ENCODE measurements at regions of chr10 and their contacts with region 1.

Region 1: DNA sequence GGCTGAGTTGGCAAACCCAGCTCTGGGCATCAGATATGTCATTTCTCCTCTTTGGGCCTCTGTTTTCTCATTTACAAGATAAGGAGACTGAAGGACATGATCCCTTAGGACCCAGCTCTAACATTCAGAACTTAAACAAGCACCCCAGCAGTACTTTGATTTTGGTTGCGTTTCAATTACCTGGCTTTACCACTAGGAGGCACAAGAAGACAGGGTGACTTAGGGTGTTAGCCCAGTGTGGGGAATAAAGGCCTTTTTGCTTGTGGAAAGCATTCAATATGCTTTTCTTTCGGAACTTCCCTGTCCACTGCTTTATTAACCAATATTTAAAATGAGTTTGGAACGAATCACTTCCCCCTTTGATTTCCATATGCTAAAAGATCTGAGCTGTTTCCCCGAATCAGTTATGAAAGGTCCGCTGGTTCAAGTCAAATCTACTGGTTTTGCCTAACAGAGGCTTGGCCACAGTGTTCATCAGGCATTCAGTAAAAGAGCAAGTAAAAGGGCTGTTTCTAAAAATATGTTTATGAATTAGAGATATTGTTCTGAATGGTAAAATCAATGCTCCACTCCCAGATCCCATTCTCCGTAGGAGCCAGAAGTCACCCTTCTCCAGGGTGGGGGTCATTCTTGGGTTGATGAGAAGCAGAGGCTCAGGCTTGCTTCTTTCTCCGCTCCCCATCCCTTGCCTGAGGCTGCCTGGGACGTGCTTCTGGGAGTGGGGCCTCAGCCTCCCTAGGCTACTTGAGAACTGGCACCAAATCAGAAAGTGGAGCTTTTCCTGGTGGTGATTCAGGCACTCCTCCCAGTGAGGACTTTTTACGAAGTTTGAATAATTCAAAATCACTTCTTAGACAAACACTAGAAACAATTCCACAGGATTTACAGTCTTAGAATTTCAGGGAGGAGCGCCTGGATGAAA is 105.5 kb downstream of the MYOF start:
- H3K4me3 ChIP-seq: no peak overlapping the region
- H3K27ac ChIP-seq: no peak overlapping the region
- H3K4me1 ChIP-seq: 0 out of 2 replicates have a peak, but pooled peaks cover 4% of the 10 kb centered on the region
- CTCF ChIP-seq: peak; percentile 59; the same call in 1 of the 2 replicates

Region 2: DNA sequence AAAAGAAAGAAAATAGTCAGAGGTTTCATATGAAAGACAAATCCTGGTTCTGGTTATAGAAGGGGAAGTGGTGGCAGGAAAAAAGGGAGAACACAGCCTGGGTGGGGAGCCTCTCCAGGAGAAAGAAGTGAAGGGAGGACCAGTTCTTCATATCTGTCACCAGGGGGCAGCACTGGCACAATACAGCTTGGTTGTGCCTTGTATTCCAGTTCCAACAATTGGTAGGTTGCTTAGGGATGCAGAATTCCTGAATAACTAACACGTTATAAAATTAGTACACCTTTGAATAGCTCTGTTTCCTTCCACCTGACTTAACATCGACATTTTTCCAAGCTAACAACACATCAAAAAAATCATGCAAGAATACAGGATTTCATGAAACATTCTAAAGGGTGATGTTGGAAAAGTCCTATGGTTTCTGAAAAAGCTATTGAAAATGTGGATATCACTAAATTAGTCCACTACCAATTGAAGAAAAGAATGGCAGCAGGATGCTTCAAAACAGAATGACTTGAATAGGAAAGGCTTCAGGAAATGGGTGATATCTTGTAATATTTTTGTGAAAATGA is 250.1 kb before region 1 on chr10:
- CTCF ChIA-PET with region 1: no interaction called
- POLR2A ChIA-PET with region 1: no interaction called
- H3K4me3 ChIP-seq: no peak overlapping the region
- H3K27ac ChIP-seq: no peak overlapping the region
- H3K4me1 ChIP-seq: no peaks in the 10 kb centered on the region
- CTCF ChIP-seq: no peak

Region 3: GRCh38 chr10:93245779-93246178 is 130.9 kb before region 1 on chr10:
- CTCF ChIA-PET with region 1: no interaction called
- POLR2A ChIA-PET with region 1: no interaction called
- H3K4me3 ChIP-seq: no peak overlapping the region
- H3K27ac ChIP-seq: no peak overlapping the region
- H3K4me1 ChIP-seq: no peaks in the 10 kb centered on the region
- CTCF ChIP-seq: no peak

Region 4: GRCh38 chr10:93352638-93353383 is 23.8 kb before region 1 on chr10:
- CTCF ChIA-PET with region 1: interaction called, 17 read pairs
- POLR2A ChIA-PET with region 1: no interaction called
- H3K4me3 ChIP-seq: no peak overlapping the region
- H3K27ac ChIP-seq: no peak overlapping the region
- H3K4me1 ChIP-seq: no peaks in the 10 kb centered on the region
- CTCF ChIP-seq: no peak

Region 5: DNA sequence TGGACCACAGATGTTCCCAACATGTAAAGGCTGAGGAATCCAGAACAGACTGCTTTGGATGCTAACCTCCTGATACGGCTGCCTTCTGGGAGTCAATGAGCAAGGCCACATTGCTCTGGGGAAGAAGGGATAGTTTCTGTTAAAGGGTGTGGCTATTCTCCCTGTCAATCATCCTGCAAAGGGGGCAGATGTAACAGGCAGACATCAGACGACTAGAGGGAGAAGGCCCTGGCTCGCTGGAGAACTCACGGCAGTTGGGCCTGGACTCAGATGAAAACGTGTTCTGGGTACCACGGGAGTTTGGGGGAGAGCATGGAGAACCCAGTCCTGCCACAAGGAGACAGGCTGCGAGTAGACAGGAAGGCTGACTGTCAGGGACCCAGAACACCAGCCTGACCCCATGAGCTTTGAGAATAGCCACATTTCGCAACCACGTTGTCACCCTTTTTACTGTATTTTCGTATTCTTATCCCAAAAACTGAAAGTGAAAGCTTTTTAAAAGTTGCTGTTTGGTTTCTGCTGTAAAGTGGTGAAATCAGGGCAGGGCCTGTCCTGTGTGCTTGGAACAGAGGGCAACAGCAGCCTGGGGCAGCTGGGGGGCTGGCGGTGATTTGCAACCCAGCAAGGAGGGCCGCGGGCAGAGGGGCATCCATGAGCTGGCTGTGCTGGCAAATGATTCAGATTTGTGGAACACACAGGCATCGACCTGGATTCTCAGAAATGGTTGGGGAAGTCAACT is 10.2 kb after region 1 on chr10:
- CTCF ChIA-PET with region 1: interaction called, 27 read pairs
- POLR2A ChIA-PET with region 1: no interaction called
- H3K4me3 ChIP-seq: no peak overlapping the region
- H3K27ac ChIP-seq: no peak overlapping the region
- H3K4me1 ChIP-seq: no peaks in the 10 kb centered on the region
- CTCF ChIP-seq: no peak

Region 6: GRCh38 chr10:93420091-93420490 is 43.5 kb after region 1 on chr10:
- CTCF ChIA-PET with region 1: interaction called, 13 read pairs
- POLR2A ChIA-PET with region 1: no interaction called
- H3K4me3 ChIP-seq: no peak overlapping the region
- H3K27ac ChIP-seq: no peak overlapping the region
- H3K4me1 ChIP-seq: 0 out of 2 replicates have a peak, but pooled peaks cover 3% of the 10 kb centered on the region
- CTCF ChIP-seq: no peak

Region 7: GRCh38 chr10:93471110-93471651 is 94.5 kb after region 1 on chr10:
- CTCF ChIA-PET with region 1: interaction called, 67 read pairs
- POLR2A ChIA-PET with region 1: no interaction called
- H3K4me3 ChIP-seq: no peak overlapping the region
- H3K27ac ChIP-seq: no peak overlapping the region
- H3K4me1 ChIP-seq: no peaks in the 10 kb centered on the region
- CTCF ChIP-seq: no peak

Region 8: DNA sequence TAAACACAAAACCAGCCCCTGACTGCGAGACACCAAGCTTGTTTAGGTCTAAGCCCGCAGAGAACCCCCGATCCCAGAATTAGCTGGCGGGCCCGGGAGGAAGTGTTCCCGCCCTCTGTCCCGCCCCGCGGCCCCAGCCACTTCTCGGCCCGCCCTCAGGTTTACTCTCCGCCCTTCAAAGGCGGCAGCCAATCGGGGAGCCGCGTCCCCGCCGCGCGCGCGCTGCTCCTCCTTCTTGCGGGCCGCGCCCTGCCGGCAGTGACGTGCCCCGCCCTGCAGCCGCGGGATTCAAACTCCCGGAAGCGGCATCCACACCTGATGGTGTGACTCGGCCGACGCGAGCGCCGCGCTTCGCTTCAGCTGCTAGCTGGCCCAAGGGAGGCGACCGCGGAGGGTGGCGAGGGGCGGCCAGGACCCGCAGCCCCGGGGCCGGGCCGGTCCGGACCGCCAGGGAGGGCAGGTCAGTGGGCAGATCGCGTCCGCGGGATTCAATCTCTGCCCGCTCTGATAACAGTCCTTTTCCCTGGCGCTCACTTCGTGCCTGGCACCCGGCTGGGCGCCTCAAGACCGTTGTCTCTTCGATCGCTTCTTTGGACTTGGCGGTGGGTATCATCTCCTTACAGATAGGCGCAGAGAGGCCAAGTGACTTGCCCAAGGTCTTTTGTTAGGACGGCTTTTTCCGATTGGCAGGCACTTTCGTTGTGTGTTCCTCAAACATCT is 119.8 kb after region 1 on chr10 and contains the start of gene CEP55:
- CTCF ChIA-PET with region 1: interaction called, 435 read pairs
- POLR2A ChIA-PET with region 1: no interaction called
- H3K4me3 ChIP-seq: peak within 1 kb of the TSS; percentile 72
- H3K27ac ChIP-seq: peak within 1 kb of the TSS; percentile 87
- H3K4me1 ChIP-seq: no peaks in the 10 kb centered on the region; the same call in 1 of the 2 replicates
- CTCF ChIP-seq: 0 out of 2 replicates have a peak, but pooled peaks have one; percentile 14

Region 9: DNA sequence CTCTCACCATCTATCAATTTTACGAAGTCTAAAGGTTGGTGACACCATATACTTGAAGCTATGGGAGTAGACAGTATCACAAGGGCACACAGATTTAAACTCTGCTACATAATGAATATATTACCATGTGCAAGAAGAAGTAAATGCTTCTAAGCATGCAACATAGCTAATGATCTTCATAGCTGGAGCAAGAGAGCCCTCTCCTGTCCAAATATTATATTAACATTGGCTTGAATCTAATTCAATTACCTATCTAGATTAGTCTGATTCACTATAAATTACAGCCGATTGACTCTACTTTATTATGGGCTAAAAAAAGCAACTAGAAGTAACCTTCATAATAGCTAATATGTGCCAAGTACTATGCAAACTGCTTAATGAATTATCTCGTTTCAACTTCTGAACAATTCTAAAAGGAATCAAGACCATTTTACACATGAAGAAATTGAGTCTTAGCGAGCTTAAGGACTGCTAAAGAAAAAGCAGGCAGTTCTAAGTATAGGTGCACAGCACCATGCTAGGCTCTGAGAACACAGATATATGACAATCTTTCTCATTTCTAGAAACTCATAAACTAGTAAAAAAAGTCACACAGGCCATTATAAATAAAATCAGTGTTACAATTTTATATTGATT is 303.9 kb after region 1 on chr10:
- CTCF ChIA-PET with region 1: interaction called, 14 read pairs
- POLR2A ChIA-PET with region 1: no interaction called
- H3K4me3 ChIP-seq: no peak overlapping the region
- H3K27ac ChIP-seq: no peak overlapping the region
- H3K4me1 ChIP-seq: no peaks in the 10 kb centered on the region
- CTCF ChIP-seq: 0 out of 2 replicates have a peak, but pooled peaks have one; percentile 13

Region 10: DNA sequence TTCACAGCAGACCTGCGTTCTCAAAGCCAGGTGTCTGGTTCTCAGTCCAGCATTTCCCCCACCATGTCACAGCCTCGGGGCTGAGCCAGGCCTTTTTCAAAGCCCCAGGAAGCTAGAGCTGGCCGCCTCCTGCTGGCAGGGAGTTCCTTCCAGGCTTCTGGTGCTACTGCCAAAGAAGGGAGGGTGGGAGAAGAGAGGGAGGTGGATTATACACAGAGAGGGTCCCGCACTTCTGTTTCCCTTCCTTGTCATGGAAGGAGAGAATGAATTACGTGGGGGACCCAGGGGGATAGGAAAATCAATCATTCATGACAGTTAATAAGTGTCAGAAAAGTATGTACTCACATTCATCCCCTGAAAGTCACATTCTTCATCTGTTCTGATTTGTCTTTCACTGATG is 380.5 kb after region 1 on chr10:
- CTCF ChIA-PET with region 1: no interaction called
- POLR2A ChIA-PET with region 1: no interaction called
- H3K4me3 ChIP-seq: no peak overlapping the region
- H3K27ac ChIP-seq: no peak overlapping the region
- H3K4me1 ChIP-seq: peaks cover 3% of the 10 kb centered on the region; the same call in 1 of the 2 replicates
- CTCF ChIP-seq: no peak